AG04449 (cell line): ENCODE measurements at regions of chr1 and their contacts with region 1.

Region 1: DNA sequence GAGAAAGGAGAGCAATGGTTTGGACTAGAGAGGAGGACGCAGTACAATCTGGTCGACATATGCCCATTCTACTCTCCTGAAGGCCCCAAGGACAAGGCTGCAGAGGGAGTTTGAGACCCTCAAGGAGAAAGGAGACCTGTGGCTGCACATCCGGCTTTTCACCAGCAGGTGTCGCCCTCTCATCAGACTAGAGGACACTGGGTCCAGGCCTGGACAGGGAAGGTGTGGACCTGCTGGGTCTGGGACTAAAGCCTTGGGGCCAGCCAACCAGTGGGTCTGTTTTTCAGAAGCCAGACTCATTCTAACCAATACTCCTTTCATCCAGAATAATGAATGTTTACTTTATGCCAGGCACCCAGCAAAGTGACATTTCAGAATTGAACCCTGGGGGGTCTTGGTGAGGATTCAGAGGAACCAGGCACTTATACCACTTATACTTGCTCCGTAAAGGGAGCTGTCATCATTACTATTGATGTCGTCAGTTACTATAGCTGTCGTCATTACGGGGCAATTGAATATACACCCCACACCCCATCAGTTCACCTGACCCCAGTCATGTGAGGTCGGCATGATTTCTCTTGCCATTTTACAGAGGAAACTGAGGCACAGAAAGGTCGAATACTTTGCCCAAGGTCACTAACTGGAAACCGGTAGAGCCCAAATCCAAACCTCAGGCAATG is 5.1 kb downstream of the SRARP start:
- DNase-seq: no peak
- H3K4me3 ChIP-seq: no peak overlapping the region
- CTCF ChIP-seq: peak; percentile 92

Region 2: DNA sequence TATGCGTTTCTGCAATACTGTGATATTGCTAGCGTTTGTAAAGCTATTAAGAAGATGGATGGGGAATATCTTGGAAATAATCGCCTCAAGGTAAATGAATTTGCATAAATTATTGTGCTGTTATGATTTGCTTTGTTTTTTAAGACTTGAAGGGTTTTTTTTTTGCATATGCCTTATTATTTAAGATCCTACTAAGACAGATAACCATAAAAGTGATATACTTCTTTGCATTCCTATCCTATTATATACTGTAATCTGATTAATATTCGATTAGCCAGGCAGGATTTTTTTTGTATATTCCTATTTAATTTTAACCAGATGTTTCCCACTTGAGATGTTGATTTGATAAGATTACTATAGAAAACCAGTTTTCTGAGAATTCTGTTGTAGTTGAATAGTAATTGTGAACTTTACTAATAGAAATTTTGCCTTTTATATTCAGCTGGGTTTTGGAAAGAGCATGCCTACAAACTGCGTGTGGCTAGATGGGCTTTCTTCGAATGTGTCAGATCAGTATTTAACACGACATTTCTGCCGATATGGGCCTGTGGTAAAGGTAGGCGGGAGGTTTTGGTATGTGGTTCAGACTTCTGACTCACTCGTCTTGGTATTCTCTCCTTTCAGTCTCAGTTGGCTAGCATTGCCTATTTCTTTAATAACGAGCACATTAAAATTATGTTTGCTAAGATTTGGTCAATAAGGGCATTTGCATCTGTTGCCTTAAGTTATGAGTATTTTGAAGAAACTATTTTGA is 90.0 kb before region 1 on chr1:
- CTCF ChIA-PET with region 1: no interaction called
- POLR2A ChIA-PET with region 1: no interaction called
- DNase-seq: peak; percentile 55
- H3K4me3 ChIP-seq: no peak overlapping the region
- CTCF ChIP-seq: no peak

Region 3: GRCh38 chr1:15985611-15986297 is 23.4 kb before region 1 on chr1:
- CTCF ChIA-PET with region 1: interaction called, 25 read pairs
- POLR2A ChIA-PET with region 1: no interaction called
- DNase-seq: no peak
- H3K4me3 ChIP-seq: no peak overlapping the region
- CTCF ChIP-seq: no peak

Region 4: GRCh38 chr1:16026723-16027484 is 17.7 kb after region 1 on chr1:
- CTCF ChIA-PET with region 1: interaction called, 97 read pairs
- POLR2A ChIA-PET with region 1: no interaction called
- DNase-seq: no peak
- H3K4me3 ChIP-seq: peak overlapping the region; percentile 10
- CTCF ChIP-seq: no peak

Region 5: DNA sequence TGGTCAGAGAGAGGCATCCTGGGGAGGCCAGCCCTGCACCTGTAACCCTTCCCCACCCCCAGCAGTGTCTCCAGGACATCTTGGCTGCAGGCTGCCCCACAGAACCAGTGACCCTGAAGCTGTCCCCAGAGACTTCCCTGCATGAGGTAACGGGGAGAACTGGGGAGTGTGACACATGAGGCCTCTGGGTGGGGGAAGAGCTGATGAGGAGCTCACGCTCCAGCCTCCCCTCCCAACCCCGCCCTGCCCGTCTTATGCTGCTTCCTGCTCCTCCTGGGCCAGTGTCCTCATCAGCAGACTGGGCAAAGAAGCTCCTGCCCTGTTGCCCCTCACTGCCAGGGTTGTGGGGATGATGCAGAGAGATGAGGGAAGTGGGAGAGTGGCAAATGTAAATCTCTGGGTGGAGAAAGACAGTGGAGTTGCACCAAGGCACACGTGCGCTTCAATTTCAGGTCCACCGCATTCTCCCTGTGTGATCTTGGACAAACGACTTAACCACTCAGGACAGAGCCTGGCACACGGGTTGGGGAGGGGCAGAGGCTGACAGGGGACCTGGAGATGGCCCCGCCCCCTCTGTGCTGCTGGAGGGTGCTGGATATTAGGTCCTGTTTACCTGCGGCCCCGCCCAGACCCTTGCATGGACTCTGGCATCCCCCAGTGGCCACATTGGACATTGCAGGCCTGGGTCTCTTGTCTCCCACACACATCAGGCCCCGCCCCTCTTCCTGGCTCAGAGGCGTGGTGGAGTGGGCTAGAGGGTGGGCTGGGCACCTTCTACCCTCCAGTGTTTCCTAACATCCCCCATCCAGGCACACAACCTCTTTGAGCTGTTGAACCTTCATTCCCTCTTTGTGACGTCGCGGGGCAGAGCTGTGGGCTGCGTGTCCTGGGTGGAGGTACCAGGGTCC is 46.7 kb after region 1 on chr1:
- CTCF ChIA-PET with region 1: interaction called, 129 read pairs
- POLR2A ChIA-PET with region 1: no interaction called
- DNase-seq: no peak
- H3K4me3 ChIP-seq: no peak overlapping the region
- CTCF ChIP-seq: peak; percentile 94

Region 6: DNA sequence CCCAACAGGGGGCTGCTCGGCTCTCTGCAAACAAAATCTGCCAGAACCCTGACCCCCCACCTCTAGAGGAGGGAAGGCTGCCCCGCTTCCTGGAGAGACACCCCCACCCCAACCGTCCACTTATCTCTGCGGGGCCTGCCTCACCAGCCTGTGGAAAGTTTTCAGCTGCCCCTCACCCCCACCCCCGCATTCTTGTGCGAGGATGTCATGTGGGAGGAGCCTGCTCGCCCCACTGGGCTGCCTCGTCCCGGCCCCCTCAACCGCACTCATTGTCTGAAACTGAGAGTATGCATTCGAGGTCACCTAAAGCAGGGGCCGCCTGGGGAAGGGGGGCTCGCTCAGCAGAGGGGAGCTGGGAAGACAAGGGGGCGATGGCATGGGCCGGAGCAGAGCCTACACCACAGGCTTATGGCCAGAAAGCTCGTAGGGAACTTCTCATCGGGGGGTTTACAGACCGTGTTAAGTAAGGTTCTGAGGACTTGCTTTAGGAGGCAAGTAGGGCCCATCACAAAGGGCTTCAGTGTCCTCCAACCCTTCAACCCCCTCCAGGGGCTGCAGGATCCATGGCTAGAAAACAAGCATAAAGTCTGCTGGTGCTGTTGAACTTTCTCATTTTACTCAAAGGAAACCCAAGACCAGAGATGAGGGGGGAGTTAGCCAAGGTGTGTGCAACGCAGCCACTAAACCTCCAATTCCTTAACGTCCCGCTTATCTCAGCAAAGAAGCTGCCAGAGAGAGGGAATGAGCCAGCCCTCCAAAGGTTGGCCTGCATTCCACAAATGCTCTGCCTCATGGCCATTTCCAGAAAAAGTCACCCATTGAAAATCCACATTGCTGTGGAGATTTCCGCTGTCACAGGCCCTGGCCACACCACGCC is 137.3 kb after region 1 on chr1:
- CTCF ChIA-PET with region 1: no interaction called
- POLR2A ChIA-PET with region 1: no interaction called
- DNase-seq: no peak
- H3K4me3 ChIP-seq: peak overlapping the region; percentile 45
- CTCF ChIP-seq: no peak

Region 7: DNA sequence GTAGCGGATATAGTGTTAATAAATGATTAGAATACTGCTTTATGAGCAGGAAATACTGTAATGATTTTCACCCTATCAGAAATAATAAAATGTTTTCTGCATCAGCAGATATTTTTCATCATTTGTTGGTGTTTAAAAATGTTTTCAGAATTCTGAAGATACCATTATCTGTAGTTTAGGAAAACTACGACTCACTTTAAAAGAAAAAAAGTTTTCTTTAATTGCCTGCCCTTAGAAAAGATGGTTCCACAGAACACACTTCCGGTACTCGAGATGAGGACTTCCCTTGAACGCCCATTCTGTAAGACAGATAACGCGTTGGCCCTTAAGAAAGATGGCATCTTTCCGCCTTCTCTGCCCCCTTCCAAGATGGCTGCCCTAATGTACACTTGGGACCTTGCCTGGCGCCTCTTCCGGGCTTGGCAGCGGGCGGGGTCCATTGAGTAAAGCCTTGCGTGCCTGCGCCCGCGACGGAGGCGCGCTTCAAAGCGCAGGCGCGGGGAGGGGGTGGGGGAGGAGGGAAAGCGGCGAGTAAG is 357.6 kb after region 1 on chr1 and contains the start of gene SZRD1:
- CTCF ChIA-PET with region 1: interaction called, 10 read pairs
- POLR2A ChIA-PET with region 1: no interaction called
- DNase-seq: peak; percentile 98
- H3K4me3 ChIP-seq: peak within 1 kb of the TSS; percentile 87
- CTCF ChIP-seq: no peak